BJ (cell line): ENCODE measurements at regions of chr2 and their contacts with region 1.

Region 1: GRCh38 chr2:88199912-88200682 is 30.0 kb downstream of the THNSL2 start:
- DNase-seq: no peak
- H3K4me3 ChIP-seq: no peak overlapping the region
- H3K27me3 ChIP-seq: peaks cover 13% of the 10 kb centered on the region
- CTCF ChIP-seq: no peak

Region 2: DNA sequence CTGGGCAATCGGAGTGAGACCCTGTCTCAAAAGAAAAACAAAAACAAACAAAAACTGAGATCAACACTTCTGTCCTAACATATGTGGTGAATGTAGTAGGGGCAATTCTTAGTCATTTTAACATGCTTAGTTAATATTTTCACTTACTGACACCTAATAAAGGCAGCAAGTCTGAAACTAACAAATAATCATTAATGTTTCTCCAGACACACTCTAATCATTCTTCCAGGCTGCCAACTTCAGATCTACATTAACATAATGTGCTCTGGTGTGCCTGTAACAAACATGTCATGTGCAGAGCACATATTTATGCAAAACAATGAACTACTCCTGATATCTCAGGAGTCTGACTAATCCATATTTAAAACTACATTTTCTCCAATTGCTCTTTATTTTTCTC is 150.5 kb before region 1 on chr2:
- CTCF ChIA-PET with region 1: no interaction called
- POLR2A ChIA-PET with region 1: interaction called, 15 read pairs
- DNase-seq: no peak
- H3K4me3 ChIP-seq: no peak overlapping the region
- H3K27me3 ChIP-seq: no peaks in the 10 kb centered on the region
- CTCF ChIP-seq: no peak

Region 3: GRCh38 chr2:88187038-88187676 is 12.9 kb before region 1 on chr2:
- CTCF ChIA-PET with region 1: interaction called, 17 read pairs
- POLR2A ChIA-PET with region 1: no interaction called
- DNase-seq: no peak
- H3K4me3 ChIP-seq: no peak overlapping the region
- H3K27me3 ChIP-seq: no peaks in the 10 kb centered on the region
- CTCF ChIP-seq: peak; percentile 80